ENCODE measurements at regions of chr20 and their contacts with region 1.

Region 1: GRCh38 chr20:44861531-44862006 is 23.9 kb upstream of the YWHAB start:
- DNase-seq: no peak
- H3K4me3 ChIP-seq: no peak overlapping the region
- H3K27ac ChIP-seq: no peak overlapping the region
- H3K4me1 ChIP-seq: no peaks in the 10 kb centered on the region
- H3K27me3 ChIP-seq: no peaks in the 10 kb centered on the region
- CTCF ChIP-seq: no peak

Region 2: GRCh38 chr20:44319756-44320422 is 541.7 kb before region 1 on chr20:
- CTCF ChIA-PET with region 1: interaction called, 13 read pairs
- POLR2A ChIA-PET with region 1: no interaction called
- intact Hi-C with region 1: no loop called
- DNase-seq: no peak
- H3K4me3 ChIP-seq: no peak overlapping the region
- H3K27ac ChIP-seq: no peak overlapping the region
- H3K4me1 ChIP-seq: no peaks in the 10 kb centered on the region
- H3K27me3 ChIP-seq: no peaks in the 10 kb centered on the region
- CTCF ChIP-seq: no peak

Region 3: GRCh38 chr20:44683263-44684046 is 178.1 kb before region 1 on chr20:
- CTCF ChIA-PET with region 1: no interaction called
- POLR2A ChIA-PET with region 1: no interaction called
- intact Hi-C with region 1: no loop called
- DNase-seq: no peak
- H3K4me3 ChIP-seq: no peak overlapping the region
- H3K27ac ChIP-seq: no peak overlapping the region
- H3K4me1 ChIP-seq: no peaks in the 10 kb centered on the region
- H3K27me3 ChIP-seq: no peaks in the 10 kb centered on the region
- CTCF ChIP-seq: no peak

Region 4: DNA sequence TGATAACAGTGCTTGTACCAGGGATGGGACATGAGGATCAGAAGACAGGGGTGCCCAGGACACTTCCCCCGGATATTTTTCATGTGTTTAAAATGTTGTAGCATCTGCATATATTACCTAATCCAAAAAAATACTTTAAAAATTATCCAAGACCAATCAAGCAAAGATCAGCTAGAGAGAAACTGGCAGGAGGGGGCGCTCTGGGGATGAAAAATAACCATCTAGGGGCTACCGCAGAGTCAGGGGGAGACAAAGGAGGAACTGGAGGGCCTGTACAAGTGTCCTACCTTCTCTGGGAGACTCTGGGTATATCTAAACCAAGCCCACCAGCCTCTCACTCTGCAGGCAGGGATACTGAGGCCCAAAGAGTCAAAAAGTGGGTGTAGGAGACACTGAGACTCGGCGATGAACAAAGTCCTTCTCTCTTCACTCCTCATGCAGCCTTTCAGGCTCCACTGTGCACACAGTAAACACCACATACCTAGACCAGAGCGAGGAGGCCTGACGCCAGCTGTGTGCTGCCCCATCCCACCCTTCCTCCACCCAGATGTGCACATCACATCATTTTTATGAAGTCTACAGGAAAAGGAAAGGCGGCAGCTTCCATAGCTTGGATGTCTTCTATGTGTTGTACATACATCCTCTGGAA is 61.0 kb before region 1 on chr20:
- CTCF ChIA-PET with region 1: no interaction called
- POLR2A ChIA-PET with region 1: no interaction called
- intact Hi-C with region 1: no loop called
- DNase-seq: no peak
- H3K4me3 ChIP-seq: no peak overlapping the region
- H3K27ac ChIP-seq: no peak overlapping the region
- H3K4me1 ChIP-seq: no peaks in the 10 kb centered on the region
- H3K27me3 ChIP-seq: peaks cover 20% of the 10 kb centered on the region
- CTCF ChIP-seq: peak; percentile 69

Region 5: DNA sequence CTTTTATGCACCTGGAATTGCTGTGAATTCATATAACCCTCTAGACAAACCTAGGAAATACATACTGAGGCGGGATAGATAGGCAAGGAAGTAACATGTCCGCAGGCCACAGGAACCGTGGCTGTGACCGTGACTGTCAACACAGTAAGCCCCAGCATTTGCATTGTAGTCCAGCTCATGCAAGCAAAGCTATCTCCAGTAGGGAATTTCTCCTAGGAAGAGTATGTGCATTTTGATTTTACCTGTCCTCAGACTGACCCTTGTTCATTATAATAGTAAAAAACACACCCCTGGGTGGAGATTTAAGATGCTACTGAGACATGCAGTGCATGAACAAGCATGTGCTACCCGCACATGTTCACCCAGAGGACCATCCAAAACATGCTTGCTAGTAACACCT is 20.7 kb before region 1 on chr20:
- CTCF ChIA-PET with region 1: interaction called, 11 read pairs
- POLR2A ChIA-PET with region 1: no interaction called
- intact Hi-C with region 1: no loop called
- DNase-seq: no peak
- H3K4me3 ChIP-seq: no peak overlapping the region
- H3K27ac ChIP-seq: no peak overlapping the region
- H3K4me1 ChIP-seq: no peaks in the 10 kb centered on the region
- H3K27me3 ChIP-seq: peaks cover 30% of the 10 kb centered on the region
- CTCF ChIP-seq: no peak

Region 6: GRCh38 chr20:44896583-44896982 is 35.0 kb after region 1 on chr20:
- CTCF ChIA-PET with region 1: no interaction called
- POLR2A ChIA-PET with region 1: no interaction called
- intact Hi-C with region 1: no loop called
- DNase-seq: peak; percentile 33
- H3K4me3 ChIP-seq: no peak overlapping the region
- H3K27ac ChIP-seq: no peak overlapping the region
- H3K4me1 ChIP-seq: peaks cover 16% of the 10 kb centered on the region
- H3K27me3 ChIP-seq: no peaks in the 10 kb centered on the region
- CTCF ChIP-seq: no peak

Region 7: DNA sequence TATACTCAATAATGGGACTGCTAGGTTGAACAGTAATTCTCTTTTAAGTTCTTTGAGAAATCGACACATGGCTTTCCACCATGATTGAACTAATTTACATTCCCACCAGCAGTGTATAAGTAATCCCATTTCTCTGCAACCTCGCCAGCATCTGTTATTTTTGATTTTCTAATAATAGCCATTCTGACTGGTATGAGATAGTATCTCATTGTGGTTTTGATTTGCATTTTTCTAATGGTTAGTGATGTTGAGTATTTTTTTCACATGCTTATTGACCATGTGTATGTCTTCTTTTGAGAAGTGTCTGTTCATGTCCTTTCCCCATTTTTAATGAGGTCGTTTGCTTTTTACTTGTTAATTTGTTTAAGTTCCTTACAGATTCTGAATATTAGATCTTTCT is 171.2 kb after region 1 on chr20:
- CTCF ChIA-PET with region 1: no interaction called
- POLR2A ChIA-PET with region 1: no interaction called
- intact Hi-C with region 1: no loop called
- DNase-seq: no peak
- H3K4me3 ChIP-seq: no peak overlapping the region
- H3K27ac ChIP-seq: no peak overlapping the region
- H3K4me1 ChIP-seq: peaks cover 19% of the 10 kb centered on the region
- H3K27me3 ChIP-seq: no peaks in the 10 kb centered on the region
- CTCF ChIP-seq: no peak

Measured in A673 (cell line).